ENCODE measurements at regions of chr20 and their contacts with region 1.

Region 1: GRCh38 chr20:25390538-25391528 is at the start of gene ABHD12:
- DNase-seq: peak; percentile 96
- H3K4me3 ChIP-seq: peak within 1 kb of the TSS; percentile 98
- H3K27ac ChIP-seq: peak within 1 kb of the TSS; percentile 58
- H3K4me1 ChIP-seq: peaks cover 30% of the 10 kb centered on the region
- CTCF ChIP-seq: no peak
- total RNA-seq, gene ABHD12: 5.9 and 10.6 TPM in 2 replicates

Region 2: DNA sequence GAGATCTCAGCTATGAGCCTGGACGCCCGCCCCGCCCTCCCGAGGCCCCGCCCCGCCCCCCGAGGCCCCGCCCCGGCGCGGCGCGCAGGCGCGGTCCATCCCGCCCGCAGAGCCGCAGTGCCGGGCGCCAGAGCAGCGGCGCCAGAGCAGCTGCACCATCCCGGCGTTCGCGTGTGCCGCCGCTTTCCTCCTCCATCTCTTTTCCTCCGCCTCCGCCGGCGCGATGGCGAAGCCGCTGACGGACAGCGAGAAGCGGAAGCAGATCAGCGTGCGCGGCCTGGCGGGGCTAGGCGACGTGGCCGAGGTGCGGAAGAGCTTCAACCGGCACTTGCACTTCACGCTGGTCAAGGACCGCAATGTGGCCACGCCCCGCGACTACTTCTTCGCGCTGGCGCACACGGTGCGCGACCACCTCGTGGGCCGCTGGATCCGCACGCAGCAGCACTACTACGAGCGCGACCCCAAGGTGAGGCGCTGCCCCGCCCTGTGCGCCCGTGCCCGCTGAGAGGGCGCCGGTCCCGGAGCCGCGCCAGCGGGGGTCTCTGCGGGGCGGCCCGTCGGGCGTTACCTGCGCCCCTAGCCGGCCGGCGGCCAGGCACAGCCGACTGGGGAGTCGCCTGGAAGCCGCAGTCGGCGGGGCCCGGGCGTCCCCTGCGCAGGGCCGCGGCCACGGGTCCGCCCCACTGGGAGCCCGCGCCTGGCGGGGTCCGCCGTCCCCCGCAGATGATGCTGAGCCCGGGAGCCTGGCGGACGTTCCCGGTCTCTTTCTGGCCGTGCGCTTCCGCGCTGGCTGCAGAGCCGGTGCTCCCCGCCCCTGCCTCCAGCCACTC is 142.7 kb before region 1 on chr20 and contains the start of gene PYGB:
- CTCF ChIA-PET with region 1: no interaction called
- POLR2A ChIA-PET with region 1: no interaction called
- intact Hi-C with region 1: loop called (anchors 5 kb)
- DNase-seq: peak; percentile 81
- H3K4me3 ChIP-seq: peak within 1 kb of the TSS; percentile 80
- H3K27ac ChIP-seq: peak within 1 kb of the TSS; percentile 47
- H3K4me1 ChIP-seq: peaks cover 38% of the 10 kb centered on the region
- CTCF ChIP-seq: no peak
- total RNA-seq, gene PYGB: 4.5 and 4.9 TPM in 2 replicates

Region 3: DNA sequence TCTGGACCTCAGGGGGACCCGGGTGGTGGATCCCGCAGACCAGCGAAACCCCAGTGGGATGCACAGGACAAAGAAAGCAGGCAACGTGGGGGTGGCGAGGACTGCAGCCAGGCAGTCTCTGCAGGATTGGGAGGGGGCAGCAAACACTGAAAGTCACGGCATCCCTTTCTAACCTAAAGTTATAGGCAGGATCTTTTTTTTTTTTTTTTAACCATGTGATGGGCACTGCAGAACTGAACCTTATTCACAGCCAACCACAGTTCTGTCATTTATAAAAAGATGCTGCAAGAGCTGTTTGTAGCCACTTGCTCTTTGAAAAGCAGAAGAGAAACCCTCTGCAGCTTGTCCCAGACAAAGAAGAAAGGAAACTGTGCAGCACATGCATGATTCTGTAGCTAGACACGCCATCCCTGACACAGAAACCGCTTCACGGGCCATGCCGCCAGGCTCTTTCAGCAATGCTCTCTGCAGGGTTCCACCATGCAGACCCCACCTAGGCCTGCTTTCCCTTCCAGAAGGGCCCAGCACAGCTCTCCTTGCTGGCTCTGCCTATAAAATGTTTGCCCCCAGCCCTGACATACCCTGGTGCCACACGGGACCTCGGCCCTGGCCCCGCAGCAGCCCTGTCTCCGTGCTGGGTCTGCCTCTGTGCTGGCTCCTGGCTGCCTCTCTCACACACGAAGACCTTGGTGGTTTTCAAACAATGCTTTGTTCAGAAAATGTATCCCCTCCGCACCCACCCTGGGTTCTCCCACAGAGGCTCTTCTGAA is 72.2 kb before region 1 on chr20:
- CTCF ChIA-PET with region 1: no interaction called
- POLR2A ChIA-PET with region 1: interaction called, 5 read pairs
- intact Hi-C with region 1: loop called (anchors 1 kb)
- DNase-seq: peak; percentile 93
- H3K4me3 ChIP-seq: peak overlapping the region; percentile 48
- H3K27ac ChIP-seq: peak overlapping the region; percentile 86
- H3K4me1 ChIP-seq: peaks cover 38% of the 10 kb centered on the region
- CTCF ChIP-seq: no peak; the same call in 1 of the 2 replicates

Region 4: DNA sequence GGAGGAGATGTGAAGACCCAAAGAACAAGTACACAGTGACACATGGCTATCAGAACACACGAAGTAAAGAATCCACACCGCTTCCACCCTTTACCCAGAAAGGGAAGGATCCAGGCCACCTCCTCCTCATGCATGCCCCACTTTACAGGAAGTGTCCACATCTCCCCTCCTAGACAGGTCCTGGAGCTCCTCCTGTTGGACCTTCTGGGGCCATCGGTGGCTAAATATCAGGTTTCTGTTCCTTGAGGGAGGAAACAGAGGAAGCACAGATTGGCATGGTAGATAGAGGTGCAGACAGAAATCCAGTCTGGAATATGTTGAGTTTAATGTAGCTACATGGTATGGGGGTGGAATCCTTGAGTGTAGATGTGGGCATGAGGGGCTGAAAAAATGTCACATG is 183.6 kb after region 1 on chr20:
- CTCF ChIA-PET with region 1: no interaction called
- POLR2A ChIA-PET with region 1: no interaction called
- intact Hi-C with region 1: no loop called
- DNase-seq: no peak
- H3K4me3 ChIP-seq: no peak overlapping the region
- H3K27ac ChIP-seq: no peak overlapping the region
- H3K4me1 ChIP-seq: no peaks in the 10 kb centered on the region
- CTCF ChIP-seq: no peak

Measured in OCI-LY7 (cell line).